ENCODE measurements at regions of chr3 and their contacts with region 1.

Region 1: DNA sequence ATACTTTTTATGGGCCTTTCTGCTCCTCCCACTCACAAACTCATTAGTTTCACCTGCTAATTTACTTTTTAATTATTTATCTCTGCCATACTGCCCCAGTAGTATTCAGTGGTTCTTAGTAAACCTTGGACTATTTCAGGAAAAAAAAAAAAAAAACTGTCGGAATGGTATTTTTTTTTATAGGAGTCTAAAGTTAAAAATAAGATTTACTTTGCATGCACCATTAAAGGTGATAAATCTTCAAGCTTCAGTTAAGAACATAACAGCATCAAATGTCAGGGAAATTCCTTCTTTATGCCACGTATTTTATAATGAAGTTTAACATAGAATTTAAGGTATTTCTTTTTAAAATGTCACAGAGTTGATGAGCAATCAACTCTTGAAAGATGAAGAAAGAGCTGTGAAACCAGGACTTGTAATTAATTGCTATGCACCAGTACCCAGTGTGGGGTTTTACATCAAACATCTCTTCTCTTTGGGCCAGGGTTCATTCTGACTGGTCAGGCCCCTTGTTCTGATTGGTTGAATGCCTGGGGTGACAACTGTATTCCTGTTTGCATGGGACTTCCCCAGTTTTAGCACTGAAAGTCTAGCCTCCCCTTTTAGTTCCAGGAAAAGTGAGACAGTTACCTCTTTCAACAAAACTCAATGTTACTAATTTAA is 40.3 kb upstream of the PTPRG start:
- DNase-seq: peak; percentile 77
- ATAC-seq: peak; percentile 96
- H3K4me3 ChIP-seq: no peak overlapping the region
- H3K27ac ChIP-seq: no peak overlapping the region
- H3K4me1 ChIP-seq: no peaks in the 10 kb centered on the region; the same call in 1 of the 2 replicates
- H3K27me3 ChIP-seq: no peaks in the 10 kb centered on the region
- CTCF ChIP-seq: no peak
- EP300 ChIP-seq: peak; percentile 49 to 70; a peak in 2 of 4 replicates
- POLR2A ChIP-seq: no peak
- RAD21 ChIP-seq: no peak

Region 2: DNA sequence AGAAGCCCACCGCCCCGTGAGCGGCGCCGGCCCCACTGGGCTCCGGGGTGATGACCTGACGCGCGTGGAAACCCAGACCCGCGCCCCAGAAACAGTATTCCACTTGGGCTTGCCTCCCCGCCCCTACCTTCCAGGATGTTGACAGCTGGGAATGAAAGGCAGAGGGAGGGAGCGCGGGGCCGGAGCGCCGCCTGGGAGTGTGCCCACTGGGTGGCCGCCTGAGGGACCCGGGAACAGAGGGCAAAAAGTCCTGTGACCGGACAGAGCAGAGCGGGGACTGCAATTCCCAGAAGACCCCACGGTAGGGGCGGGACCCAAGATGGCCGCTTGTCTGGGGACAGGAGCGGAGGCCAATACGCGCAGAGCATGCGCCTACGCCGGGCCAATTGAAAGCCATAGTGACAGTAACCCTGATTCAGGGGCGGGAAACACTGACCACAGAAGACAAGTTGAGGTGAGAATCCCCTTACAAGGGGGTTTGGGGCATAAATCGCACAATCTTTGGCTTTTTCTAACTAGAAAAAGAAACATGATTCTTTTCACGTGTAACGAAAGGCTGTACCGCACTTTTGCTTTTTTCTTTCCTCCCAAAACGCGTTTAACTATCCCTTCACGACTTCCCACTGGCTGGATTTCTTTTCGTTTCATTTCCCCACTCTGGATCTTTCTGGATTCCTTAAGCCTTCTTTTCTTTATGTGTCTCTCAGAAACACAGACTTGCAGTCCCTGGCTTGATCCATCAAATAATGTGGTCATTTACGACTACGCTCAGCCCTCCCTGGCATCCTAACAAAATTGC is 269.7 kb before region 1 on chr3 and contains the start of gene FHIT:
- CTCF ChIA-PET with region 1: no interaction called
- POLR2A ChIA-PET with region 1: no interaction called
- RAD21 ChIA-PET with region 1: no interaction called
- SMC1A ChIA-PET with region 1: no interaction called
- in situ Hi-C with region 1: no loop called
- intact Hi-C with region 1: loop called (anchors 5 kb)
- DNase-seq: peak; percentile 87
- ATAC-seq: peak; percentile 96
- H3K4me3 ChIP-seq: peak within 1 kb of the TSS; percentile 76
- H3K27ac ChIP-seq: peak within 1 kb of the TSS; percentile 68
- H3K4me1 ChIP-seq: peaks cover 5% of the 10 kb centered on the region; the same call in 1 of the 2 replicates
- H3K27me3 ChIP-seq: no peaks in the 10 kb centered on the region
- CTCF ChIP-seq: peak in 1 of 3 experiments; percentile 21; a peak in 1 of 6 replicates
- EP300 ChIP-seq: no peak
- POLR2A ChIP-seq: peak; percentile 74
- RAD21 ChIP-seq: 0 out of 2 replicates have a peak, but pooled peaks have one; percentile 8
- polyA plus RNA-seq, gene FHIT: 4.2 to 7.9 TPM

Region 3: DNA sequence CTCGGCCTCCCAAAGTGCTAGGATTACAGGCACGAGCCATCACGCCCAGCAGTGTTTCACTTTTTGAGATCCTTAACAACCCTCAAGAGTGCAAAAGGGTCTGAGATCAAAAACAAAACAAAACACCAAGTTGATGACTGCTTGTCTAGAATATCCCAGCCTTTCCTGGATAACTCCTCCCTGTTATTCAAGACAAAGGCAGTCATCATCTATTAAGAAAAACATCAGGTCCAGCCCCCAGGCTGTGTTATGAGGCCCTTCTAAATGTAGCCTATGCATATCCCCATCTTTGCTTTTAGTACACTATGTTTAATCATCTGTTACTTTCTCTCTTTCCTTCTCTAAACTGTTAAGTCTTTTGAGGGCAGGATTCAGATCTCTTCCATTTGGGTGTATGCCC is 119.7 kb before region 1 on chr3:
- CTCF ChIA-PET with region 1: no interaction called
- POLR2A ChIA-PET with region 1: no interaction called
- RAD21 ChIA-PET with region 1: no interaction called
- SMC1A ChIA-PET with region 1: no interaction called
- in situ Hi-C with region 1: no loop called
- intact Hi-C with region 1: no loop called
- DNase-seq: no peak
- ATAC-seq: no peak
- H3K4me3 ChIP-seq: no peak overlapping the region
- H3K27ac ChIP-seq: no peak overlapping the region
- H3K4me1 ChIP-seq: no peaks in the 10 kb centered on the region
- H3K27me3 ChIP-seq: no peaks in the 10 kb centered on the region
- CTCF ChIP-seq: no peak
- EP300 ChIP-seq: no peak
- POLR2A ChIP-seq: no peak
- RAD21 ChIP-seq: no peak

Region 4: DNA sequence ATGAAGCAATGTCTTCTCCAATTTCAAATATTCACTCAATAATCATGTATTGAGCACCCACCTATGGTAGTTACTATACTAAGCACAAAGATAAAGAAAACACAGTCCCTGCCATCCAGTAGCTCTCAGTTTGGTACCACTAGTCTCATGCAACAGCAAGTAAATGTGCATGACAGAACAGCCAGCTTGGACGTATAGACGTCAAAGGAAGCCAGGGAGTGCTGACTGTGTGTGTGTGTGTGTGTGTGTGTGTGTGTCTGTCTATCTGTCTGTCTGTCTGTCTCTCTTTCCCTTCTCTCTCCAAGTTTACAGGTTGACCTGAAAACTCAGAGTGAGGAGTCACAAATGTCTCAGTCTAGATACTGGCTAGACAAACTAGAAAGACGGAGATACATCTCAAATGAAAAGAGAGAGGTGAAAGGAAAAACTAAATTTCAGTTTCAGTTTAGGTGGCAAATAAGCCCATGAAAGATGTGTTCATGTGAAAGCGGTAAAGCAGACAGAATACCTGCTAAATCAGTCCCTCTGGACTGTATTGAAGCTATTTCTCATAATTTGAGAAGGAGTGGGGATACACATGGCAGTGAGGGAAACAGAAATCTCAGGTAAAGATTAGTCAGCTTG is 100.8 kb before region 1 on chr3:
- CTCF ChIA-PET with region 1: interaction called, 3 read pairs
- POLR2A ChIA-PET with region 1: interaction called, 3 read pairs
- RAD21 ChIA-PET with region 1: interaction called, 16 read pairs
- SMC1A ChIA-PET with region 1: interaction called, 8 read pairs
- in situ Hi-C with region 1: no loop called
- intact Hi-C with region 1: no loop called
- DNase-seq: no peak
- ATAC-seq: peak; percentile 91
- H3K4me3 ChIP-seq: no peak overlapping the region
- H3K27ac ChIP-seq: no peak overlapping the region
- H3K4me1 ChIP-seq: peaks cover 3% of the 10 kb centered on the region; the same call in 1 of the 2 replicates
- H3K27me3 ChIP-seq: no peaks in the 10 kb centered on the region
- CTCF ChIP-seq: no peak
- EP300 ChIP-seq: peak in 1 of 2 experiments; percentile 46; a peak in 1 of 4 replicates
- POLR2A ChIP-seq: no peak
- RAD21 ChIP-seq: no peak

Region 5: GRCh38 chr3:61505197-61505596 is 15.9 kb before region 1 on chr3:
- CTCF ChIA-PET with region 1: interaction called, 3 read pairs
- POLR2A ChIA-PET with region 1: interaction called, 3 read pairs
- RAD21 ChIA-PET with region 1: interaction called, 5 read pairs
- SMC1A ChIA-PET with region 1: interaction called, 24 read pairs
- in situ Hi-C with region 1: no loop called
- intact Hi-C with region 1: no loop called
- DNase-seq: no peak
- ATAC-seq: no peak
- H3K4me3 ChIP-seq: no peak overlapping the region
- H3K27ac ChIP-seq: no peak overlapping the region
- H3K4me1 ChIP-seq: no peaks in the 10 kb centered on the region
- H3K27me3 ChIP-seq: no peaks in the 10 kb centered on the region
- CTCF ChIP-seq: no peak
- EP300 ChIP-seq: no peak
- POLR2A ChIP-seq: no peak
- RAD21 ChIP-seq: no peak

Region 6: DNA sequence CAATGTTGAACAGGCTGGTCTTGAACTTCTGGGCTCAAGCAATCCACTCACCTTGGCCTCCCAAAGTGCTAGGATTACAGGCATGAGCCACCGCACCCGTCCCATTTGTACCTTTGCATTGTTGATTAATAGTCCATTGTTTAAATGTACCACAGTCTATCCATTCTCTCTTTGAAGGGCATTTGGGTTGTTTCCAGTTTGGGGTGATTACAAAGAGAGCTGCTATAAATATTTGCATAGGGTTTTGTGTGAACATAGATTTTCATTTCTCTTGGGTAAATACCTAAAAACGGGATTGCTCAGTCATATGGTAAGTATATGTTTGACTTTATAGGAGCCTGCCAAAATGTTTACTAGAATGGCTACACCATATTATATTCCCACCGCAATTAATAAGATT is 26.5 kb after region 1 on chr3:
- CTCF ChIA-PET with region 1: interaction called, 3 read pairs
- POLR2A ChIA-PET with region 1: interaction called, 3 read pairs
- RAD21 ChIA-PET with region 1: interaction called, 5 read pairs
- SMC1A ChIA-PET with region 1: interaction called, 6 read pairs
- in situ Hi-C with region 1: no loop called
- intact Hi-C with region 1: loop called (anchors 1 kb)
- DNase-seq: no peak
- ATAC-seq: peak; percentile 84
- H3K4me3 ChIP-seq: no peak overlapping the region
- H3K27ac ChIP-seq: no peak overlapping the region
- H3K4me1 ChIP-seq: no peaks in the 10 kb centered on the region
- H3K27me3 ChIP-seq: no peaks in the 10 kb centered on the region
- CTCF ChIP-seq: no peak
- EP300 ChIP-seq: peak in 1 of 2 experiments; percentile 70; a peak in 1 of 4 replicates
- POLR2A ChIP-seq: no peak
- RAD21 ChIP-seq: no peak

Region 7: GRCh38 chr3:61617041-61617440 is 95.9 kb after region 1 on chr3:
- CTCF ChIA-PET with region 1: no interaction called
- POLR2A ChIA-PET with region 1: no interaction called
- RAD21 ChIA-PET with region 1: no interaction called
- SMC1A ChIA-PET with region 1: no interaction called
- in situ Hi-C with region 1: no loop called
- intact Hi-C with region 1: no loop called
- DNase-seq: no peak
- ATAC-seq: no peak
- H3K4me3 ChIP-seq: no peak overlapping the region
- H3K27ac ChIP-seq: no peak overlapping the region
- H3K4me1 ChIP-seq: no peaks in the 10 kb centered on the region
- H3K27me3 ChIP-seq: peaks cover 0 to 3% of the 10 kb centered on the region in 2 experiments; a peak in 2 of 4 replicates
- CTCF ChIP-seq: no peak
- EP300 ChIP-seq: no peak
- POLR2A ChIP-seq: no peak
- RAD21 ChIP-seq: no peak

Region 8: GRCh38 chr3:61637088-61638051 is 116.3 kb after region 1 on chr3:
- CTCF ChIA-PET with region 1: no interaction called
- POLR2A ChIA-PET with region 1: no interaction called
- RAD21 ChIA-PET with region 1: no interaction called
- SMC1A ChIA-PET with region 1: no interaction called
- in situ Hi-C with region 1: no loop called
- intact Hi-C with region 1: loop called (anchors 5 kb)
- DNase-seq: peak; percentile 48
- ATAC-seq: peak; percentile 97
- H3K4me3 ChIP-seq: no peak overlapping the region
- H3K27ac ChIP-seq: no peak overlapping the region
- H3K4me1 ChIP-seq: peaks cover 10% of the 10 kb centered on the region; the same call in 1 of the 2 replicates
- H3K27me3 ChIP-seq: no peaks in the 10 kb centered on the region
- CTCF ChIP-seq: no peak
- EP300 ChIP-seq: peak; percentile 56 to 95; a peak in 3 of 4 replicates
- POLR2A ChIP-seq: no peak
- RAD21 ChIP-seq: no peak

Measured in GM12878 (cell line).